ENCODE measurements at regions of chr21 and their contacts with region 1.

Region 1: DNA sequence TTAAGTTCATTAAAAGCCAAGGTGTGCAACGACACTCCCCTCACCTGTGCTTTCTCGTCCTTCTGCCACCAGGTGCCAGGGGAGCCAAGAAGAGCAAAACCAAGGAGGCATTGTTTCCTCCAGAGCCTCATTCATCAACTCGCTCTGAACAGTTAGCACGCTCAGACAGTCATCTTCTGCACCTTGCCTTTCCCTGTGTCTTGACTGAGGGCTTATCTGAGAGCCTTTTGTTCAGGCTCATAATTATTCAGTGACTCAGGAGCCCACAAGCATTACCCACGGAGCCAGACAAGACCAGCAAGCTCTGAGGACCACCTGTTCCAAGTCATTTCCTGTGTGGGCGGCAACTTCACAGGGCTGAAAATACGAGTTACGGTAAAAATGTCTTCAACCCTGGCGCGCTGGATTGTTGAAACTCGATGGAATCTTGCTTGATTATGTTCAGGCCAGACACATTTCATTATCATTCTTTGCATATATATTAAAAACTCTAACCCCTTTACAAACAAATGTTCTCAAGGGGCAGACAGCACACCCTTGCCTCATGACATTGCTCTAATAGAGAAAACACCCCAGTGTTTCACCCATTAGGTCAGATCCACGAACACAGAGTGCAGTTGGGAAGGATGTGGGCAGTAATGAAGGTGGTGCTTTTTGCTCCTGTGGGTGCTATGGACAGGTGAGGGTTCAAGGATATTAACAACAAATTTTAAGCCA is 89.7 kb upstream of the RUNX1 start:
- DNase-seq: no peak
- H3K4me3 Mint-ChIP-seq: peak overlapping the region; percentile 62
- H3K27ac Mint-ChIP-seq: peak overlapping the region; percentile 93
- H3K4me1 Mint-ChIP-seq: peaks cover 27% of the 10 kb centered on the region
- H3K27me3 Mint-ChIP-seq: no peaks in the 10 kb centered on the region

Region 2: DNA sequence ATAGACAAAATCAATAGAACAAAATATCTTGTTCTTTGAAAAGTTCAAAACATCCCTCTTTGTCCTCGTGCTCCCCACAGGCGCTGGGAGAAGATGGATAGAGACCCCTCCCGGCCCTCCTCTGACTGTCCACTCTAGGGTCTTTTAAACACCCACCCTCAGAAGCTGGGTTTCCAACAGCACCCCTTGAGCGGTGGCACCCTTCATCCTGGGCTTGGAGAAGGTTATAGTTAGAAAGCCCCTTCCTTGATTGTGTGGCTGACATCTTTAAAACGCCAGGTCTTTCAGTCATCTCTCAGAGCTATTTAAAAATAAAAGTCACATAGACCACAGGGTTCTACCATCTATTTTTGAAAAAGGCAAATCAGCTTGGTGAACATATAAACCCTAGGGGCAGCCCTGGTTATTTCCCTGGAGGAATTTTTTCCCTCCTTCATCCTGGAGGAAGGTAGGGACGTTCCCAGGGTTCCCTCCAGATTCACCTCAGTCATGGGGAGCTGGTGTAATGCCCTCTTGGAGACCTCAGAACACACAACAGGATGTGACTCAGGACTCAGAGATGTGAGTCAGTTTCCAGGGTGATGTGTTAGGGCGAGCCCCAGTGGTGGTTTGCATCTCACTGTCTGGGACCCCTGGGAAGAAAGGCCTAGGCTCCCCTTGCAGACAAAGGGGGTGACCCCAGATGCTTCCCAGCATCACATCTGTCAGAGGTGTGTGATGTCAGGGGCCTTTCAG is 331.5 kb before region 1 on chr21:
- intact Hi-C with region 1: loop called (anchors 5 kb)
- DNase-seq: peak; percentile 54
- H3K4me3 Mint-ChIP-seq: peak overlapping the region; percentile 56
- H3K27ac Mint-ChIP-seq: peak overlapping the region; percentile 93
- H3K4me1 Mint-ChIP-seq: peaks cover 92% of the 10 kb centered on the region
- H3K27me3 Mint-ChIP-seq: no peaks in the 10 kb centered on the region

Region 3: GRCh38 chr21:35198031-35198431 is 59.2 kb after region 1 on chr21:
- intact Hi-C with region 1: loop called (anchors 2 kb)
- DNase-seq: no peak
- H3K4me3 Mint-ChIP-seq: no peak overlapping the region
- H3K27ac Mint-ChIP-seq: no peak overlapping the region
- H3K4me1 Mint-ChIP-seq: peaks cover 19% of the 10 kb centered on the region
- H3K27me3 Mint-ChIP-seq: peaks cover 6% of the 10 kb centered on the region

Region 4: GRCh38 chr21:35226948-35227744 is 88.3 kb after region 1 on chr21:
- intact Hi-C with region 1: loop called (anchors 1 kb)
- DNase-seq: peak; percentile 42
- H3K4me3 Mint-ChIP-seq: peak overlapping the region; percentile 27
- H3K27ac Mint-ChIP-seq: peak overlapping the region; percentile 6
- H3K4me1 Mint-ChIP-seq: peaks cover 41% of the 10 kb centered on the region
- H3K27me3 Mint-ChIP-seq: peaks cover 10% of the 10 kb centered on the region

Region 5: GRCh38 chr21:35528116-35529042 is 389.6 kb after region 1 on chr21:
- intact Hi-C with region 1: loop called (anchors 1 kb)
- DNase-seq: peak; percentile 26
- H3K4me3 Mint-ChIP-seq: peak overlapping the region; percentile 84
- H3K27ac Mint-ChIP-seq: peak overlapping the region; percentile 93
- H3K4me1 Mint-ChIP-seq: peaks cover 64% of the 10 kb centered on the region
- H3K27me3 Mint-ChIP-seq: no peaks in the 10 kb centered on the region